A549 (cell line): ENCODE measurements at regions of chr10 and their contacts with region 1.

Region 1: GRCh38 chr10:43292755-43293676 is 26.2 kb upstream of the RASGEF1A start:
- DNase-seq: peak; percentile 64 to 68
- ATAC-seq: peak; percentile 91 to 95
- H3K4me3 ChIP-seq: no peak overlapping the region
- H3K27ac ChIP-seq: peak overlapping the region; percentile 66 to 72
- H3K4me1 ChIP-seq: peaks cover 13% of the 10 kb centered on the region
- CTCF ChIP-seq: peak; percentile 86
- EP300 ChIP-seq: no peak
- POLR2A ChIP-seq: no peak
- RAD21 ChIP-seq: peak; percentile 89 to 92

Region 2: GRCh38 chr10:43278216-43278615 is 14.8 kb before region 1 on chr10:
- CTCF ChIA-PET with region 1: interaction called, 23 read pairs
- POLR2A ChIA-PET with region 1: no interaction called
- DNase-seq: no peak
- ATAC-seq: no peak
- H3K4me3 ChIP-seq: no peak overlapping the region
- H3K27ac ChIP-seq: no peak overlapping the region
- H3K4me1 ChIP-seq: no peaks in the 10 kb centered on the region
- CTCF ChIP-seq: no peak
- EP300 ChIP-seq: no peak
- POLR2A ChIP-seq: no peak
- RAD21 ChIP-seq: no peak

Region 3: DNA sequence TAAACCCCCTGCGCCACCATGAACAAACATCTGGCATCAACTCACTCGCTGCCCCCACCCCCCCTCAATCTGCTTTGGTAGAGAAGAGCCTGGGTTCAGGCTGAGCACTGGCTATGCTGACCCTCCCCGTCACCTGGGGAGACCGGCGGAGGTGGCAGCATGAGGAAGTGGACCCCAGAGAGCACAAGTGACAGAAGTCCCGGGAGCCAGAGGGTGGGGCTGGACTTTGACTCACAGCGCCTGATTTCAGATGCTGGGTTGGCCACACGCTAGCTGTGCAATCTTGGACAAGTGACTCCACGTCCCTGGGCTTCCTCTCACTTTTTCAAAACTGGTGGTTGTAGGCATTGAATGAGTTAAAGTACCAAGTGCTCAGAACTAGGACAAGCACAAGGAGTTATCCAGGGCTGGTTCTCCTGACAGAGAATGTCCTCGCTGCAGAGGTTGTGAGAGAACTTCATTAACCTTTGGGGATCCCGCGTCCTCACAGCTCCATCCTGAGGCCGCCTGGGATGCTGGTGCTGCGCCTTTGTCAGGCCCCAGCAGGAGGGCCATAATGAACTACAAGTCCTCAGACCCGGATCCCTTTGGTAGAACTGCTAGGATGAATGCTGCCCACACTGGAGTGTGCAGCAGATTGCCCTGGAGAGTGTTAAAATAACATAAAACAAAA is 22.7 kb after region 1 on chr10:
- CTCF ChIA-PET with region 1: interaction called, 18 read pairs
- POLR2A ChIA-PET with region 1: no interaction called
- DNase-seq: no peak
- ATAC-seq: no peak
- H3K4me3 ChIP-seq: no peak overlapping the region
- H3K27ac ChIP-seq: peak overlapping the region in 1 of 2 experiments; percentile 1; a peak in 1 of 6 replicates
- H3K4me1 ChIP-seq: peaks cover 5% of the 10 kb centered on the region; the same call in 1 of the 3 replicates
- CTCF ChIP-seq: no peak
- EP300 ChIP-seq: no peak
- POLR2A ChIP-seq: no peak
- RAD21 ChIP-seq: no peak

Region 4: DNA sequence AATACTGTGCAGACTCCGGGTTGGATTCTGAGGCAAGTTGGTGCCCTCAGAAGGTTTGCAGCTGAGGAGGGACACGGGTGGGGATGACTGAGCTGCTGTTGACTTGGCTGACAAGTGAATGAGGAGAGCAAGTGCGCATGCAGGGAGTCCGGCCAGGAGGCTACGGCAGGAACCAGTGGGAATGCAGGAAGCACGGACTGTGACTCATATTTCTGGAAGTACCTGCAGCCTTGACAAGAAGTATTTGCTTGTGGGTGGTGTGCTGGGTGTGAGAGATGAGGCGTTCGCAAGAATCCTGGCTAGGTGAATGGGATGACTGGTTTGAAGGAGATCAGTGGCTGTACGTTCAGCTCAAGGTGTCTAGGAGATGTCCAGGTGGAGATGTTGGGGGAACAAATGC is 47.6 kb after region 1 on chr10:
- CTCF ChIA-PET with region 1: interaction called, 33 read pairs
- POLR2A ChIA-PET with region 1: no interaction called
- DNase-seq: peak; percentile 89 to 90
- ATAC-seq: peak; percentile 66 to 72
- H3K4me3 ChIP-seq: no peak overlapping the region
- H3K27ac ChIP-seq: peak overlapping the region; percentile 88 to 91
- H3K4me1 ChIP-seq: peaks cover 78% of the 10 kb centered on the region
- CTCF ChIP-seq: no peak
- EP300 ChIP-seq: no peak
- POLR2A ChIP-seq: no peak
- RAD21 ChIP-seq: no peak

Region 5: DNA sequence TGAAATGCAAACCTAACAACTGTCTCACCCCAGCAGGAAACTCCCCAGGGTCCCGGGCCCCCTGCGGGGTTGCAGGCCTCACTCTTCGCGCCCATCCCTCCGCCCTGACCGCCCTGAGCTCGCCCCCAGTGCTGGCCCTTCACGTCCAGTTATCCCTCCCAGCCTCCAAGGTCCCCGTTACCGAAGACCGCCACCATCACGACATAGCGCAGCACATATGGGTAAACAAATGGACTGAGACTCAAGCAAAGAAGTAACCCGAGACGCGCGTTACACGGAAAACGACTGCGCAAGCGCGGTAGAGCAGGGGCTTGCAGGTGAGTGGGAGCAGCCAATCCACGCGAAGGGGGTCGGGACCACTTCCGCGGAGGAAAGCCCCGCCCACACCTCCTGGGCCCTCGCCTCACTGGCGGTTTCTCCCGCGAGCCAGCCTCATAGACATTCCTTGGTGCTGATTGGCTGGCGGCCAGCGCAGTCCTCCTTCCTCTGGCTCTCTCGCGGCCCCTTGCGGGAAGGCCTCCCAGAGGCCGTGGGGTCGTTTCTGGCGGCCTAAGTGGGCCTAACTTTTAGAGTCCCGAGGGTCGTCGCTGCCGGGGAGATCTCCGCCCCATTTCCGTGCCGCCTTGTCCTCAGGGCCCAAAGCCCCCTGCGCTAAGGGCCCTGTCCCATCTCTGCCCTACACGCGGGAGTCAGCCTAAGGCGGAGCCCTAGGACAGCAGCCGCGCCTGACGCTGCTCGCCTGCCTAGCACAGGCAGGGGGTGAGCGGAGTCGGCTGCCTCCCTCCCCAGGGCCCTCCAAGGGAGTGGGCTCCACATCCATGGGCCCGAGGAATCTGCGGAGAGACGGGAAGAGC is 69.2 kb after region 1 on chr10:
- CTCF ChIA-PET with region 1: interaction called, 234 read pairs
- POLR2A ChIA-PET with region 1: no interaction called
- DNase-seq: peak; percentile 86 to 97
- ATAC-seq: peak; percentile 95 to 98
- H3K4me3 ChIP-seq: peak overlapping the region; percentile 63
- H3K27ac ChIP-seq: peak overlapping the region; percentile 79 to 96
- H3K4me1 ChIP-seq: peaks cover 11% of the 10 kb centered on the region
- CTCF ChIP-seq: peak; percentile 50
- EP300 ChIP-seq: no peak
- POLR2A ChIP-seq: peak; percentile 40
- RAD21 ChIP-seq: peak; percentile 41 to 51